Panc1 (cell line): ENCODE measurements at regions of chr1 and their contacts with region 1.

Region 1: DNA sequence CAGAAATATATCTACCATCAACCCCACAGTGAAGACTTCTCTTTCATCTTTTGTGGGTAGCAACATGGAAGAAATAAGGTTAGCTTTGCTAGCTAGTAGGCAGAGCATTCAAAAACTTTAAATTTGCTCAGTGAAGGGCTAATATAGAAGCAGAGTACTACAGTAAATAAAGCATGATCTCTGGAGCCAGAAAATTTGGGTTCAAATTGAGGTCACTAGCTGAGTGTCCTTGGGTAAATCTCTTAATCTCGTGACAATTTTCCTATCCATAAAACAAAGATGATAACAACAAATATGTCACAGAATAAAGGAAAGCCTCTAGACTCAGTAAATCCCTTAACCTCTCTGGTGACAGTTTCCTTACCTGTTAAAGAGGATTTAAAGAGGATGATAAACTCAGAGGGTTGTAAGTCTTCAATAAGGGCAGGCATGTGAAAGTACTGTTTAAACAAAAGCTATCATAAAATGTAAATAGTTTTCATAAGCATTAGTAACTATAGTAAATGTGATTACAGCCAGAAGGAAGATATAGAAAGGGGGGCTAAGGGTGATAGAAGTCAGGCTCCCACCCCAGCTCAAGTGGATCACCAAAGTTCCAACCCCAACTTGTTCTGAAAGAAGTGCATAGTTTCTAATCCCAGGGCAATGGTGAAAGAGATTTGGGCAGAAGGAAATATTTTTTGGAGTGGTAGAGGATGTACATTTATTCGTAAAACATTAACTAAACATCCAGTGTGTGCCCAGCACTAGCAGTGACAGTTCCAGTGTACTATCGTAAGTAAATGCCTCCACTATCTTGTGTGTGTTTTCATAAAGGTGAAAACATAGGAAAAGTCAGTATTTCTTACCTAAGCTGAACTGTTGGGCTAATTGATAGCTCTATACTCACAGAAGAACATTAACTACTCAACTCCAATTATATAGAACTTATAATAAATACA is 24.8 kb downstream of the TM2D1 start:
- DNase-seq: no peak
- ATAC-seq: no peak
- H3K4me3 ChIP-seq: no peak overlapping the region
- H3K27ac ChIP-seq: no peak overlapping the region
- H3K4me1 ChIP-seq: no peaks in the 10 kb centered on the region
- H3K27me3 ChIP-seq: no peaks in the 10 kb centered on the region
- CTCF ChIP-seq: no peak

Region 2: GRCh38 chr1:61226784-61227567 is 473.2 kb before region 1 on chr1:
- CTCF ChIA-PET with region 1: no interaction called
- POLR2A ChIA-PET with region 1: no interaction called
- in situ Hi-C with region 1: no loop called
- intact Hi-C with region 1: no loop called
- DNase-seq: no peak
- ATAC-seq: no peak
- H3K4me3 ChIP-seq: no peak overlapping the region
- H3K27ac ChIP-seq: no peak overlapping the region
- H3K4me1 ChIP-seq: no peaks in the 10 kb centered on the region
- H3K27me3 ChIP-seq: no peaks in the 10 kb centered on the region
- CTCF ChIP-seq: no peak

Region 3: DNA sequence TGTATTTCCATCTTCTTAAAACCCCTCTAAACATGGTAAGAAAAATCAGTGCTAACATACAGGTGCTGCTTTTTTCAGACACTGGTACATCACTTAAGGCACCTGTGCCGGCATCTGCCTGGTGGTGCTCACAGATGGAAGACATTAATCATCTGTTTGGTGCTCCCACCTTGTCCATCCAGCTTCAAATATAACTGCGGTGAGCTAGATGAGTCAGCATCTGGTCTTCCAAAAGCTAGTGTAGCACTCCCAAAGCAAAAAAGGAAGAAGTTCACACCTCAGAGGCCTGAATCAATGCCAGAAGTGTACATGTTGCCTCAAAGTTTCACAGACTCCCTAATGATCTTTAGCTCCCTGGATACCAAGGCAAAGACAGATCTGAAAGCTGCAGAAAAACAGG is 19.7 kb before region 1 on chr1:
- CTCF ChIA-PET with region 1: no interaction called
- POLR2A ChIA-PET with region 1: interaction called, 11 read pairs
- in situ Hi-C with region 1: no loop called
- intact Hi-C with region 1: no loop called
- DNase-seq: no peak
- ATAC-seq: no peak
- H3K4me3 ChIP-seq: no peak overlapping the region
- H3K27ac ChIP-seq: no peak overlapping the region
- H3K4me1 ChIP-seq: no peaks in the 10 kb centered on the region
- H3K27me3 ChIP-seq: no peaks in the 10 kb centered on the region
- CTCF ChIP-seq: no peak

Region 4: DNA sequence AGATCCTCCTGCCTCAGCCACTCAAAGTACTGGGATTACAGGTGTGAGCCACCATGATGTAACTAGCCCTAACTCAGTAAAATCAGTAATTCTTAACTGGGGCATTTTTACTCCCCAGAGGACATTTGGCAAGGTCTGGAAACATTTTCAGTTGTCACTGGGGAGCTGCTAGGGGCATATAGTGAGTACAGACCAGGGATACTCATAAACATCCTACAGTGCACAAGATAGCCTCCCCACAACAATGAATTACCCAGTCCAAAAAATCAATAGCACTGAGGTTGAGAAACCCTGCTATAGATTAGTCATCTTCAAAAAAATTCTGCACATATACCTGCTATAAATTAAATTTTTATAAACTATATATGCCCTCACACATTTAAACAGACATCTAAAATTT is 11.8 kb after region 1 on chr1:
- CTCF ChIA-PET with region 1: no interaction called
- POLR2A ChIA-PET with region 1: no interaction called
- in situ Hi-C with region 1: no loop called
- intact Hi-C with region 1: no loop called
- DNase-seq: no peak
- ATAC-seq: no peak
- H3K4me3 ChIP-seq: no peak overlapping the region
- H3K27ac ChIP-seq: no peak overlapping the region
- H3K4me1 ChIP-seq: no peaks in the 10 kb centered on the region
- H3K27me3 ChIP-seq: no peaks in the 10 kb centered on the region
- CTCF ChIP-seq: no peak

Region 5: DNA sequence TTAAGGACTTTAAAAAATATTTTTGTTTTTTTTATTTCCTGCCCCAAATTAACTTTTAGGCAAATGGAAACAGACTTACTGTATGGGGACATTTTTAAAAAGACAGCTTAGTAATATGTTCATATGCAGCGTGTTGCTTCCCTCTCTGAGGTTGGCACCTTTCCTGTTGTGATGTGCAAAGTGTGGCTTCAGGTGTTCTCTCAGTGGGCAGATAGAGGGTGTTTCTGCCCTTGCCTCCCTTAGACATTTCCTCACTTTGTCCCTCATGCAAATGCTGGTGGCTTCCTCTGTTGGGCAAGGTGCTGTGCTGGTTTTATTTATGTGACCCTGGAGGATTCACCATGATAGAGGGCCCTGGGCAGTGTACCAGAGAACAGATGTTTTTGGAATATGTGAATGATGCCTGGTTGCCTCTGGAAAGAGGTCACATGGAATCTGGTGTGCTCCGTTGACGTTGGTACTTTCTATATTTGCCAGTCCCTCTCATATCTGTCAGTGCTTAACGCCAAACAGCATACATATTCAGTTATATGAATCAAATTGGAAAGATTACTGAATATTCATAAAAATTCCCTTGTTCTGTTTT is 165.6 kb after region 1 on chr1:
- CTCF ChIA-PET with region 1: no interaction called
- POLR2A ChIA-PET with region 1: no interaction called
- in situ Hi-C with region 1: no loop called
- intact Hi-C with region 1: no loop called
- DNase-seq: no peak
- ATAC-seq: no peak
- H3K4me3 ChIP-seq: no peak overlapping the region
- H3K27ac ChIP-seq: no peak overlapping the region
- H3K4me1 ChIP-seq: no peaks in the 10 kb centered on the region
- H3K27me3 ChIP-seq: no peaks in the 10 kb centered on the region
- CTCF ChIP-seq: no peak